ENCODE measurements at regions of chr15 and their contacts with region 1.

Region 1: GRCh38 chr15:30783019-30783418 is 120.7 kb upstream of the FAN1 start:
- DNase-seq: no peak
- ATAC-seq: no peak
- H3K4me3 ChIP-seq: no peak overlapping the region
- H3K27ac ChIP-seq: no peak overlapping the region
- H3K4me1 ChIP-seq: no peaks in the 10 kb centered on the region
- H3K27me3 ChIP-seq: no peaks in the 10 kb centered on the region
- CTCF ChIP-seq: no peak
- POLR2A ChIP-seq: no peak

Region 2: GRCh38 chr15:30885814-30886213 is 102.8 kb after region 1 on chr15:
- intact Hi-C with region 1: loop called in 1 of 10 experiments (anchors 10 kb)
- DNase-seq: peak in 1 of 5 donors; percentile 27
- ATAC-seq: peak in 2 of 4 donors; percentile 56 to 79
- H3K4me3 ChIP-seq: no peak overlapping the region
- H3K27ac ChIP-seq: no peak overlapping the region
- H3K4me1 ChIP-seq: peaks cover 0 to 6% (median 0%) of the 10 kb centered on the region in 12 donors
- H3K27me3 ChIP-seq: no peaks in the 10 kb centered on the region
- CTCF ChIP-seq: no peak
- POLR2A ChIP-seq: no peak

Measured in heart left ventricle (tissue), 16 donors.